Caco-2 (cell line): ENCODE measurements at regions of chr5 and their contacts with region 1.

Region 1: GRCh38 chr5:39648532-39649213 is 223.9 kb upstream of the DAB2 start:
- DNase-seq: peak; percentile 35 to 49
- H3K4me3 ChIP-seq: no peak overlapping the region
- H3K4me3 Mint-ChIP-seq: no peak overlapping the region
- H3K27ac Mint-ChIP-seq: no peak overlapping the region
- H3K4me1 ChIP-seq: 0 out of 2 replicates have a peak, but pooled peaks cover 3% of the 10 kb centered on the region
- H3K4me1 Mint-ChIP-seq: no peaks in the 10 kb centered on the region
- H3K27me3 ChIP-seq: no peaks in the 10 kb centered on the region
- H3K27me3 Mint-ChIP-seq: no peaks in the 10 kb centered on the region
- CTCF ChIP-seq: no peak

Region 2: DNA sequence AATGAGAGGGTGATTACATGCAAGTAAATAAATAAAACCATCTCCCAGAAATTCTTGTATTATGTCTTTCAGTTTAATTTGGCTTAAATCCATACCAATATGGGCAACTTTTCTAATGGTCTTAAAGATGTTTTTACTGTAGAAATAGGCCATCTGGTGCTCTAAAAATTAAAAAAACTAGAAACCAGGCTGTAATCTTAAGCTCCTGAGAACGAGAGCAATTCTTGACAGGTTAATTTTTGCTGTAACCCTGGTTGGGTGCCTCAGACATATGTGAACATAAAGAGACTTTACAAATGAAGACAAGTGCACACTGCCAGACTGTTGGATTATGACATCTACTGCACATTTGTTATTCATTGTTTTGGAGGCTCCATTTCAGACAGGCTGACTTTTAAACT is 22.9 kb after region 1 on chr5:
- CTCF ChIA-PET with region 1: no interaction called
- POLR2A ChIA-PET with region 1: no interaction called
- intact Hi-C with region 1: no loop called
- DNase-seq: no peak
- H3K4me3 ChIP-seq: no peak overlapping the region
- H3K4me3 Mint-ChIP-seq: no peak overlapping the region
- H3K27ac Mint-ChIP-seq: no peak overlapping the region
- H3K4me1 ChIP-seq: no peaks in the 10 kb centered on the region
- H3K4me1 Mint-ChIP-seq: no peaks in the 10 kb centered on the region
- H3K27me3 ChIP-seq: no peaks in the 10 kb centered on the region
- H3K27me3 Mint-ChIP-seq: no peaks in the 10 kb centered on the region
- CTCF ChIP-seq: no peak

Region 3: DNA sequence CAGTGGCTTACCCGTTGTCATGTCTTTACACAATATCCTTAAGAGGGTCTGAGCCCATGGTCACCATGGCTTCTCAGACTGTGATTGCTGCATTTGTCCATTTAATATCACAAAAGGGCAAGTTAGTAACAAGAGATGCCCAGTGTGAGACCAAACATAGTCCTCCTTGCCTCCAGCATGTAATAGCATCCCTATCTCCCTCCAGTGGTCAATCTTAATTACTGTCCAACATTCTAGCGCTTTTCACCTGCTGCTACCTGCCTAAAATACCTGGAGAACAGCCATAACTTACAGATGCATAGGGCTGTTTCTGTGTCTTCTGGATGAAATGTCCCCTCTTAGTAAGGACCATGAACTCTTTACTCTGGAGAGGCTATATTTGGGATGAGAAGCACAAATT is 43.3 kb after region 1 on chr5:
- CTCF ChIA-PET with region 1: no interaction called
- POLR2A ChIA-PET with region 1: no interaction called
- intact Hi-C with region 1: loop called (anchors 2 kb)
- DNase-seq: peak in 1 of 2 experiments; percentile 38
- H3K4me3 ChIP-seq: no peak overlapping the region
- H3K4me3 Mint-ChIP-seq: no peak overlapping the region
- H3K27ac Mint-ChIP-seq: no peak overlapping the region
- H3K4me1 ChIP-seq: no peaks in the 10 kb centered on the region
- H3K4me1 Mint-ChIP-seq: no peaks in the 10 kb centered on the region
- H3K27me3 ChIP-seq: no peaks in the 10 kb centered on the region
- H3K27me3 Mint-ChIP-seq: no peaks in the 10 kb centered on the region
- CTCF ChIP-seq: peak; percentile 42 to 46